CD8-positive, alpha-beta T cell (primary cell): ENCODE measurements at regions of chr2 and their contacts with region 1.

Region 1: DNA sequence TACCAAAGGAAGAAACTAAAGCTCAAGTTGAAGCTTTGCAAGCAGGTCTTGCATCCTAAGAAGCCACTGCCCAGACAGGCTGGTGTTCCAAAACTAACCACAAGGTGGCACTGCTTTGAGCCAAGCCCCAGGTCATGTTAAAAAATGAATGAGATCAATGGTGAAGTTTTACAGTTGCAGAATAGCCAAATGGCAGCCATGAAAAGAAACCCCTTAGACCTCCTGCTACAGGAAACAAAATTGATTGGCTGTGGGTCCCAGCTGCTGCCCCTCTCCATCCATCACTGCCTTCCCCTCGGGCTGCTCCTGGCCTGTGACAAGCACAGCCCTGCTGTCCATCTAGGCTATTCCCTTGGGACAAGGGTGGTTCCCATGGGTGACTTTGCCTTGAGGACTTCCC is 20.7 kb upstream of the MREG start:
- DNase-seq: peak; percentile 65 to 86 (median 76)
- ATAC-seq: peak; percentile 95
- H3K4me3 ChIP-seq: no peak overlapping the region
- H3K4me3 Mint-ChIP-seq: no peak overlapping the region
- H3K27ac ChIP-seq: no peak overlapping the region
- H3K27ac Mint-ChIP-seq: no peak overlapping the region
- H3K4me1 ChIP-seq: peaks cover 7% of the 10 kb centered on the region
- H3K4me1 Mint-ChIP-seq: peaks cover 19% of the 10 kb centered on the region
- H3K27me3 ChIP-seq: no peaks in the 10 kb centered on the region
- H3K27me3 Mint-ChIP-seq: no peaks in the 10 kb centered on the region
- CTCF ChIP-seq: peak; percentile 75

Region 2: DNA sequence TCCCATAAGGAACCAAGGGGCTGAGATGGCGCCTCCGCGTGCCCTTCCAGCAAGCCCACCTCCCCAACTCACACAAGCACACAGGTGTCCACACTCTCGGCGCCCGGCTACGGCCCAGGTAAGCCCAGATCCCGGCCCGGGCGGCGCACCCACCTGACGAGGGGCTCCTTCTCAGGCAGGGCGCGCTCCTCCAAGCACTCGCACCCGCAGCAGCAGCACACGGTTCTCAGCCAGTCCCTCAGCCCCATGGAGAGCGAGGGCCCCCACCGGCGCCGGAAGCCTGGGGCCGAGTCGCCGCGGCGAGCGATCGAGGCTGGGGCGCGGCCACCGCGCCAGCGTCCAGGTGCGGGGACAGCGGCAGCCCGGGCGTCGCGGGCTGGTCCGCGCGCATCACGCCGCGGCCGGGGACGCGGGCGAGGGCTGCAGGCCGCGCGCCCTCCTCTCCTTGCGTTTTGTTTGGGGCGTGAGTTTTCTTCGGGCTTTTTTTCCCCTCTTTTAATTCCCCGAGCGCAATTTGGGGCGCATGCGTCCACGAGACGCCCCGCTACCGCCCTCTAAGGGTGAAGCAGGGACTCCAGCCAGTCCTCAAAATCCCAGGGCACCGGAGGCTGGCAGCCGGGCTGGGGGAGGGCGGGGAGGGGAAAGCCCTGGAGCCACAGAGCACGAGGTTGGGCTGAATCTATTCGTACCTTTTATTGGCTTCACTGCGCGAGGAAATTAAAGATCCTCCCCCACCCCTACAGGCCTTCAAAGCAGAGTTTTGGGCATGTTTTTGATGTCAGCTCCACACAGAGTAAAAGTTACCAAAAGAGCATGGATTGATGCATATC is 20.8 kb before region 1 on chr2 and contains the start of gene MREG:
- CTCF ChIA-PET with region 1: interaction called, 77 read pairs
- POLR2A ChIA-PET with region 1: no interaction called
- intact Hi-C with region 1: no loop called
- DNase-seq: peak; percentile 66 to 92 (median 83)
- ATAC-seq: peak; percentile 80
- H3K4me3 ChIP-seq: peak within 1 kb of the TSS; percentile 44 to 80
- H3K4me3 Mint-ChIP-seq: peak within 1 kb of the TSS; percentile 85
- H3K27ac ChIP-seq: peak within 1 kb of the TSS; percentile 1 to 3
- H3K27ac Mint-ChIP-seq: peak within 1 kb of the TSS; percentile 61
- H3K4me1 ChIP-seq: peaks cover 36% of the 10 kb centered on the region
- H3K4me1 Mint-ChIP-seq: peaks cover 65% of the 10 kb centered on the region
- H3K27me3 ChIP-seq: no peaks in the 10 kb centered on the region
- H3K27me3 Mint-ChIP-seq: no peaks in the 10 kb centered on the region
- CTCF ChIP-seq: peak; percentile 67
- total RNA-seq, gene MREG: 3.2 to 3.6 TPM

Region 3: GRCh38 chr2:216044883-216045486 is 10.9 kb after region 1 on chr2:
- CTCF ChIA-PET with region 1: interaction called, 28 read pairs
- POLR2A ChIA-PET with region 1: no interaction called
- intact Hi-C with region 1: no loop called
- DNase-seq: no peak
- ATAC-seq: no peak
- H3K4me3 ChIP-seq: no peak overlapping the region
- H3K4me3 Mint-ChIP-seq: no peak overlapping the region
- H3K27ac ChIP-seq: no peak overlapping the region
- H3K27ac Mint-ChIP-seq: no peak overlapping the region
- H3K4me1 ChIP-seq: no peaks in the 10 kb centered on the region
- H3K4me1 Mint-ChIP-seq: no peaks in the 10 kb centered on the region
- H3K27me3 ChIP-seq: no peaks in the 10 kb centered on the region
- H3K27me3 Mint-ChIP-seq: no peaks in the 10 kb centered on the region
- CTCF ChIP-seq: no peak

Region 4: DNA sequence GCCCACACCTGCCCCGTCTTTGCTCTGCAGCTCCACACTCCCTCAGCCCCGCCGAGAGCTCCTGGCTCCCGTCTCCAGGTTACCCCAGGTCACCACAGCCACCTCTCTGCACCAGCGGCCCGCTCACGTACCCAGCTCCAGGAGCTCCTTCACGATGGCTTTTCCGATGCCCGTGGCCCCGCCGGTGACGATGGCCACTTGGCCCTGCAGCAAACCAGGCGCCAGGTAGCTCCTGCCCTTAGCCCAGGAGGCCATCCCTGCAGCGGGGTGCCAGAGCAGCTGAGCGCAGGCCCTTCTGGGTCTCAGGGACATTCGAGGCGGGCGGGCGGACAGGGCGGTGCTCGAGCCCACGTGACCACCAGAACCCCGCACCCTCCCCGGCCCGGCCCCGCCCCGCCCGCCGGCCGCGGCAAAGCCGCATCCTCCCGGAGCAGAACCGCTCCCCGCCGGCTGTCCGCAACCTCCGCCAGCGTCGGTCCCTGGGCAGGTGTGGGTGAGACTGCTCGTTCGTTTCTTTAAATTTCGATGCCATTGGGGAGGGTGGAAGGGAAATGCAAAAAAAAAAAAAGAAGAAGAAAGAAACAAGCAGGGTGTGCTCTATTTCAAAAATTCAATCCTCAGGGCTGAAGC is 47.5 kb after region 1 on chr2 and contains the starts of genes PECR and TMEM169:
- CTCF ChIA-PET with region 1: interaction called, 11 read pairs
- POLR2A ChIA-PET with region 1: interaction called, 4 read pairs
- intact Hi-C with region 1: loop called in 1 of 2 experiments (anchors 1 kb)
- DNase-seq: peak; percentile 36 to 83 (median 68)
- ATAC-seq: peak; percentile 81
- H3K4me3 ChIP-seq: peak within 1 kb of the TSS; percentile 90 to 91
- H3K4me3 Mint-ChIP-seq: peak within 1 kb of the TSS; percentile 95
- H3K27ac ChIP-seq: peak within 1 kb of the TSS; percentile 55 to 66
- H3K27ac Mint-ChIP-seq: peak within 1 kb of the TSS; percentile 93
- H3K4me1 ChIP-seq: peaks cover 66% of the 10 kb centered on the region
- H3K4me1 Mint-ChIP-seq: peaks cover 65% of the 10 kb centered on the region
- H3K27me3 ChIP-seq: no peaks in the 10 kb centered on the region
- H3K27me3 Mint-ChIP-seq: no peaks in the 10 kb centered on the region
- CTCF ChIP-seq: no peak
- total RNA-seq, gene PECR: 5.9 to 6.4 TPM
- total RNA-seq, gene TMEM169: not detected

Region 5: DNA sequence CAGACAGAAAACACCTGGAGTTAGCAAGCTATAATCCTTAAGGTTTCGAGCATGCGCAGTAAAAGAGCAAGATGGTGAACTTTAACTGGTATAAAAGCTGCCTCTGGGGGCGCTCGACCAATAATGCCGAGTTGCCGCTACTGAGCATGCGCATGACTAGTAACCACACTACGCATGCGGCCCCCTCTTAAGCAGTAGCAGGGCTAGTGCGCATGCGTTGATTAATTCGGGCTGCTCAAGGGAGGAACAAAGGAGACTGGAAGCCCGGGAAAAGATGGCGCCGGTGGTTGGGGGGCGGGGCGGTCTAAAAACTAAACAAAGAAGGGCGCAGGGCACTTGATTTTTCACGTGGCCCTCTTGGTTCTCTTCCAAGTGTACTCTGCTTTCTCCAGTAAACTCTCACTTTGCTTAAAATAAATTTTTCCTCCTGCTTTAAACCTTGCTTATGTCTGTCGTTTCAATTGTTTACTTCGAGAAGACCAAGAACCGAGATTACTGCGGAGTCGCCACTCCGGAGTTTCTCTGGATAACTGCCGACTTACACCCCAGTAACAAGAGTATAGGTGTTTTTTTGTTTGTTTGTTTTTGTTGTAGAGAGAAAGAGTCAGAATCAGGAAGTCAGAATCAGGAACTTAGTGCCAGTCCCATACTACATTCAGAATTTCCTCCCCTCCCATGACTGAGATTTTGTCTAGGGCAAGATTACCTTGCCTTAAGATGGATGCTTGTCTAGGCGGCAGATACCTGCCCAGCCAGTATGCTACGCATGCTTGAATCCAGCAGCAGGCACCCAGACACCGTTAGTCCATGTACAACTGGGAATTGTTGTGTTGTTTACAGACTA is 80.9 kb after region 1 on chr2:
- CTCF ChIA-PET with region 1: interaction called, 24 read pairs
- POLR2A ChIA-PET with region 1: no interaction called
- intact Hi-C with region 1: no loop called
- DNase-seq: peak; percentile 94 to 99 (median 97)
- ATAC-seq: peak; percentile 91
- H3K4me3 ChIP-seq: peak overlapping the region; percentile 58 to 79
- H3K4me3 Mint-ChIP-seq: peak overlapping the region; percentile 85
- H3K27ac ChIP-seq: peak overlapping the region; percentile 60 to 81
- H3K27ac Mint-ChIP-seq: peak overlapping the region; percentile 94
- H3K4me1 ChIP-seq: peaks cover 91% of the 10 kb centered on the region
- H3K4me1 Mint-ChIP-seq: peaks cover 92% of the 10 kb centered on the region
- H3K27me3 ChIP-seq: no peaks in the 10 kb centered on the region
- H3K27me3 Mint-ChIP-seq: no peaks in the 10 kb centered on the region
- CTCF ChIP-seq: peak; percentile 69

Region 6: GRCh38 chr2:216666461-216667233 is 632.6 kb after region 1 on chr2:
- CTCF ChIA-PET with region 1: interaction called, 20 read pairs
- POLR2A ChIA-PET with region 1: no interaction called
- intact Hi-C with region 1: loop called in 1 of 2 experiments (anchors 1 kb)
- DNase-seq: peak; percentile 46 to 79 (median 66)
- ATAC-seq: peak; percentile 97
- H3K4me3 ChIP-seq: no peak overlapping the region
- H3K4me3 Mint-ChIP-seq: no peak overlapping the region
- H3K27ac ChIP-seq: no peak overlapping the region
- H3K27ac Mint-ChIP-seq: no peak overlapping the region
- H3K4me1 ChIP-seq: no peaks in the 10 kb centered on the region
- H3K4me1 Mint-ChIP-seq: no peaks in the 10 kb centered on the region
- H3K27me3 ChIP-seq: peaks cover 0 to 2% of the 10 kb centered on the region in 2 experiments
- H3K27me3 Mint-ChIP-seq: peaks cover 18% of the 10 kb centered on the region
- CTCF ChIP-seq: peak; percentile 98